Activated T-helper 2 cell treated with anti-CD3 and anti-CD28 coated beads, Interferon-gamma antibody, Interleukin-2, Interleukin-4, amounts not matched to agents 10 μg/mL and 5 μg/mL and 100 μg/mL, durations not matched to agents 14 hours and 24 hours and 36 hours (primary cell): ENCODE measurements at regions of chr1 and their contacts with region 1.

Region 1: GRCh38 chr1:235067263-235068172 is 61.1 kb downstream of the TOMM20 start:
- DNase-seq: no peak
- H3K4me3 Mint-ChIP-seq: no peak overlapping the region
- H3K27ac Mint-ChIP-seq: peak overlapping the region; percentile 60
- H3K4me1 Mint-ChIP-seq: peaks cover 39% of the 10 kb centered on the region
- H3K27me3 Mint-ChIP-seq: no peaks in the 10 kb centered on the region

Region 2: DNA sequence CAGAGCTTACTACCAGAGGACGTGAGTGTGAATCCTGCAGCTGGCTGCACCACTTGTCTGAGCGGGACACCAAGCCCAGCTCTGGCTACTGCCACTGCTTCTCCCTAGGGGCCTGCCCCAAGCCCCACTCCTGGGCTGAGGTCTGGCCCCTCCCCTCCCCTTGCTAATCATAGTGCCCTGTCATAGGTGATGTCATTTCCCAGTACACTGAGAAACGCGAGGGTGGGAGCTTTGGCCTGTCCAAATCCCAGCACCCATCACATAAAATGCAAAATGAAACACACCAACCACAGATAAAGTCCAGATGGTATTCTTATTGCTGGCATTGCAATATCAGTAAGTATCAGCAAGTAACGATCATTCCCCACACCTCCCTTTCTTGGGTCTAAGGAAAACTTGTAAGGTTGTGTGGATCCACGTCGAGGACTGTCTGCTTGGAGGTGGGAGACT is 16.6 kb before region 1 on chr1:
- intact Hi-C with region 1: loop called (anchors 1 kb)
- DNase-seq: no peak
- H3K4me3 Mint-ChIP-seq: no peak overlapping the region
- H3K27ac Mint-ChIP-seq: peak overlapping the region; percentile 88
- H3K4me1 Mint-ChIP-seq: peaks cover 50% of the 10 kb centered on the region
- H3K27me3 Mint-ChIP-seq: no peaks in the 10 kb centered on the region

Region 3: DNA sequence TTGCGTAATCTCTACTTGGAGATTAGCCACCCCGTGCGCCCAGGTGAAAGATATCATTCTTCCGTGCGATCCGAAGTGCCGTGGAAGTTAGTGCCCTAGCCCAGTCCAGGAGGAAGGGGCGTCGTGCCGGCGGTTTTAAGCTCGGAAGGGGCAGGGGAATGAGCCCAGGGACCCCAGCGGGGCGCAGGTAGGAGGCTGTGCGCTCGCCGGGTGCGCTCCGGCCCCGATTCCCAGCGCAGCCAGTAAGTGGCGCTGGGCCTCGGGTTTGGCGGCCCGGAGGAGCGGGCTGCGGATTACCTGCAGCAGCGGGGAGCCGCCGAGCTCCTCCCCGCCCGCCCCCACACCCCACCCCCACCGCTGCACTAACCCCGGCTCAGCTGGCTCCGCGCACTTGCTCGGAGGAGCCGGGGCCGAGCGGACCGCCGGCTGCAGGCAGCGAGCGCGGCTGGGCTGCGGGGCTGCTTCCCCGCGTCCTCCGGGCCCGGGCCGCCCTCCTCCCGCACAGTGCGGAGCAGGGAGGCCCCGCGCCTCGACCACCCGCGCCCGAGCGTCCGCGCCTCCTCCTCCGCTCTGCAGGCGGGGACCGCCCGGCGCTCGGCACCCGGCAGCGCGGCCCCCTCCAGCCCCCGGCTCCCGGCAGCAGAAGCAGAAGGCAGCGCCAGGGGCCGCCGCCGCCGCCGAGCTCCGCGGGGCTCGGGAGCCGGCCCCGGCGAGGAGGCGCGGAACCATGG is 1974.4 kb after region 1 on chr1 and contains the start of gene RYR2:
- intact Hi-C with region 1: no loop called
- DNase-seq: no peak
- H3K4me3 Mint-ChIP-seq: peak within 1 kb of the TSS; percentile 62
- H3K27ac Mint-ChIP-seq: no peak within 1 kb of the TSS
- H3K4me1 Mint-ChIP-seq: peaks cover 12% of the 10 kb centered on the region
- H3K27me3 Mint-ChIP-seq: peaks cover 46% of the 10 kb centered on the region
- total RNA-seq, gene RYR2: 8.7 and 8.8 TPM in 2 replicates